IMR-90 (cell line): ENCODE measurements at regions of chr17 and their contacts with region 1.

Region 1: DNA sequence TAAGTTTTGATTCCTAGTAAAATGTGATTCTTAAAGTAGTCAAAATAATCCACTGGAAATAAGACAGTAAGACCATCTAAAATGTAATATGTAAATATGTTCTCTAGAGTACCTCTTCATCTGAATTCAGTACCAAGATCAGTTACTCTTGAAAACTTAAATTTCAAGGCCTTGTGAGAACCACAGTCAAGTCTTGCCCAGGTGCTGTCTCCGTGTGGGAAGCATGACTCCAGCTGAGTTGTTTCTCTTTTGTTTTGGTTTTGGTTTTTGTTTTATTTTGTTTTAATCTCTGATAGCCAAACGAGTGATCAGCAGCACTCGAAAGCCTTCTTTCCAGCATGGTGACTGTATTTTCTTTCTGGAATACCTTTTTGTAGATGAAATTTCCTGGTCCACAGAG is 907.0 kb downstream of the KCNJ18 start:
- DNase-seq: no peak
- ATAC-seq: no peak
- H3K4me3 ChIP-seq: no peak overlapping the region
- H3K27ac ChIP-seq: no peak overlapping the region
- H3K4me1 ChIP-seq: no peaks in the 10 kb centered on the region
- H3K27me3 ChIP-seq: no peaks in the 10 kb centered on the region
- CTCF ChIP-seq: no peak
- POLR2A ChIP-seq: no peak
- RAD21 ChIP-seq: no peak

Region 2: GRCh38 chr17:22251498-22251897 is 347.8 kb before region 1 on chr17:
- CTCF ChIA-PET with region 1: no interaction called
- POLR2A ChIA-PET with region 1: no interaction called
- dilution Hi-C with region 1: no loop called
- in situ Hi-C with region 1: no loop called
- intact Hi-C with region 1: no loop called
- DNase-seq: no peak
- ATAC-seq: no peak
- H3K4me3 ChIP-seq: no peak overlapping the region
- H3K27ac ChIP-seq: no peak overlapping the region
- H3K4me1 ChIP-seq: no peaks in the 10 kb centered on the region
- H3K27me3 ChIP-seq: no peaks in the 10 kb centered on the region
- CTCF ChIP-seq: no peak
- POLR2A ChIP-seq: no peak
- RAD21 ChIP-seq: no peak

Region 3: DNA sequence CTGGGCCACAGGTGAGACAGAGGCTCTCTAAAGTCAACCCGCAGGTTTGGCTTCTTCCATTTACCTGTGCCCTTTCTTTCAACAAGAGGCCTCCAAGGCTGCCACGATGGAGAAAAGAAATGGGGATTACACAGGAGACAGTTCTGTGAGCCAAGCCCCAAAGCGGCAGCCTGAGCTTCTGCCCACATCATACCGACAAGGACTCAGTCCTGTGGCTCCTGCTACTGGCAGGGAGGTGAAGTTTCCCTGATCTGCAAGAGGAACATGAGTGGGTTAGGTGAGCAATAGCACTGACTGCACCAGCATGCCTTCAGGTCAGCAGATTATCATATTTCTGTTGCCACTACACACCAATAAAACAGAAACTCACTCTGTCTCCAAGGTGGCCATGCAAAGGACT is 107.0 kb before region 1 on chr17:
- CTCF ChIA-PET with region 1: no interaction called
- POLR2A ChIA-PET with region 1: no interaction called
- dilution Hi-C with region 1: no loop called
- in situ Hi-C with region 1: no loop called
- intact Hi-C with region 1: no loop called
- DNase-seq: no peak
- ATAC-seq: no peak
- H3K4me3 ChIP-seq: no peak overlapping the region
- H3K27ac ChIP-seq: no peak overlapping the region
- H3K4me1 ChIP-seq: no peaks in the 10 kb centered on the region
- H3K27me3 ChIP-seq: no peaks in the 10 kb centered on the region
- CTCF ChIP-seq: no peak
- POLR2A ChIP-seq: no peak
- RAD21 ChIP-seq: no peak

Region 4: DNA sequence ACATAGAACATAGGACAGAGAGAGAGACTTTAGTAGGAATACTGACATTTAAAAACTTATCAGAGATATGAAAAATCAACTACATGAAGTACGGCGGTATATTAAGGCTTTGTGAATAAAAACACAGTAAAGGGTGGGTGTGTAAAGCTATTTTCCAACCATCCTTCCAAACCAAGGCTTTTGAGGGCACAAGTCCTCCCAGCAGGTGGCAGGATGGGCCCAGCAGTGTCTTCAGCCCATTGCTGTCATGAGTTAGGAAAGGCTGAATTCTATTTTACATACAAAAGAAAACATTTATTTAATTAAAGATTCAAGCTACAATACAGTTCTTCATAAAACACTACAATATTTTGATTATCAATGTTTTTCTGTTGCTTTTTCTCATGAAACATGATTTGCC is 65.6 kb before region 1 on chr17:
- CTCF ChIA-PET with region 1: no interaction called
- POLR2A ChIA-PET with region 1: no interaction called
- dilution Hi-C with region 1: no loop called
- in situ Hi-C with region 1: no loop called
- intact Hi-C with region 1: loop called (anchors 10 kb)
- DNase-seq: no peak
- ATAC-seq: no peak
- H3K4me3 ChIP-seq: no peak overlapping the region
- H3K27ac ChIP-seq: no peak overlapping the region
- H3K4me1 ChIP-seq: no peaks in the 10 kb centered on the region
- H3K27me3 ChIP-seq: no peaks in the 10 kb centered on the region
- CTCF ChIP-seq: no peak
- POLR2A ChIP-seq: no peak
- RAD21 ChIP-seq: no peak